ENCODE measurements at regions of chr7 and their contacts with region 1.

Region 1: DNA sequence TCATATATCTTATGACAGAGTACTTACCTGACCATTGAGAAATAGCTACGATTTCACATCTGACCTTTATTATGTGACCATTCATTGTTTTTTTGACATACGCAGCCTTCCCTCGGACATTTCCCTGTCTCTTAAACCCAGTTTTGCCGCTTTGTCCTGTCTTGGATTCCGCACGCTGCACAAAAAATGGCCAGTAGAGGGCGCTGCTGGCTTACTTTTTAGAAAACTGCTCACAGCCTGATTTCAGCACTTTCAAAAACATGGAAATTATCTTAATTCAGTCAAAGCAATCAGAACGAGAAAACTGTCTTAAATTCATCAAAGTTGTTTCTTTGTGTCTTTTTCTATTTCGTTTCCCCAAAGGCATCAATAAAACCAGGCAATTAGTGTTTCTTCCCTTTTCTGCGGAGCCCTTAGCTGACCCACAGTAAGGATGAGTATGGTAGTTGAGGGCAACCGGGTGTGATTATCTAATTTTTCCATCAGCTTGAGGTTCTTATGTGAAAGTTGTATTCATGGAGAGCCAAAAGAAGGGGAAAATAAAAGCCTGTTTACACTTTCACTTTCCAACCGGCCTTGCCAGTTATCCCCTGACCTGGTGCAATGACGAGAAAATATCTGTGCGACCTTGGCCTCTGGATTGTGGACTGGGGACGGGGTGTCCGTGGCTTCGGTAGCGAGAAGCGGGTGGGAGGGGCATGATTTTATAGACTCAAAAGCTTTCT is 144.4 kb downstream of the DYNC1I1 start:
- DNase-seq: peak; percentile 83
- ATAC-seq: peak; percentile 75
- H3K4me3 ChIP-seq: peak overlapping the region; percentile 44; the same call in 1 of the 2 replicates
- H3K27ac ChIP-seq: no peak overlapping the region
- H3K4me1 ChIP-seq: peaks cover 19% of the 10 kb centered on the region
- H3K27me3 ChIP-seq: no peaks in the 10 kb centered on the region
- CTCF ChIP-seq: peak; percentile 95

Region 2: GRCh38 chr7:95886501-95887090 is 30.1 kb before region 1 on chr7:
- CTCF ChIA-PET with region 1: no interaction called
- POLR2A ChIA-PET with region 1: no interaction called
- intact Hi-C with region 1: no loop called
- DNase-seq: peak; percentile 35
- ATAC-seq: peak; percentile 89
- H3K4me3 ChIP-seq: no peak overlapping the region
- H3K27ac ChIP-seq: no peak overlapping the region
- H3K4me1 ChIP-seq: peaks cover 3% of the 10 kb centered on the region; the same call in 1 of the 2 replicates
- H3K27me3 ChIP-seq: no peaks in the 10 kb centered on the region
- CTCF ChIP-seq: no peak

Region 3: DNA sequence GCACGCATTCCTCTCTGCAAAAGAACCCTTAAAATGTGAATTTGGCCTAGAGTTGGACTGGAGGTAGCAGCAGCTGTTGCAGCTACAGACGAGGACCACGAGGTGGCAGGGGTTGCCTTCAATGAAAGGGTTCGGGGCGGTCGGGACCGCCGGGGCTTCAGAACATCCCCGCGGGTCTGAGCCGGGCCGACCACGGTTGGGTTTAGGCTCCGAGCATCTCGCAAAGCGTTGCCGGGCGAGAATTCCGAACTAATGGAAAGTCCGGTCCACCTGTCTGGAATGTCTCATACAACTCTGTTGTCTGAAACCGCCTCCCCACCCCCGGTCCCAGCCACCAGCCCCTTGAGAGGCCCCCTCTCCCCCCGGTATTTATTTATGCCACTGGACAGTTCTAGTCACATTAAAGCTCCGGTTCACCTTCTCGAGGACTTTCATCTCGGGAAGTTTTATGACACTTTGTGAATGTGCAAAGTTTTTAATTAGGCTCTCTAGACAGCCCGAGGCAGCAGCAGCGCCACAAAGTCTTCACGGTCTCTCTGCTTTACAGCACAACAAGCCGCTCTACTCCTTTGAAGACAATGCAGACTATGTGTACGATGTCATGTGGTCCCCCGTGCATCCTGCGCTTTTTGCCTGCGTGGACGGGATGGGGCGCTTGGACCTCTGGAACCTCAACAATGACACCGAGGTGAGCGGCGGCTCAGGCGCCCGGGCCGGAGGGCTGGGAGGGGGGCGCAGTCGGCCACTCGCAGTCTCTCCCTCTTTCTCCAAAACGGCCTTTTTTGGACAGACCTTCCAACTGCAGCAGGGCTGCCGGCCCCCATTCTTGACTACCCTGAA is 159.0 kb after region 1 on chr7:
- CTCF ChIA-PET with region 1: no interaction called
- POLR2A ChIA-PET with region 1: no interaction called
- intact Hi-C with region 1: loop called (anchors 2 kb)
- DNase-seq: peak; percentile 71
- ATAC-seq: peak; percentile 85
- H3K4me3 ChIP-seq: peak overlapping the region; percentile 73
- H3K27ac ChIP-seq: no peak overlapping the region
- H3K4me1 ChIP-seq: peaks cover 17% of the 10 kb centered on the region
- H3K27me3 ChIP-seq: no peaks in the 10 kb centered on the region
- CTCF ChIP-seq: peak; percentile 90

Region 4: DNA sequence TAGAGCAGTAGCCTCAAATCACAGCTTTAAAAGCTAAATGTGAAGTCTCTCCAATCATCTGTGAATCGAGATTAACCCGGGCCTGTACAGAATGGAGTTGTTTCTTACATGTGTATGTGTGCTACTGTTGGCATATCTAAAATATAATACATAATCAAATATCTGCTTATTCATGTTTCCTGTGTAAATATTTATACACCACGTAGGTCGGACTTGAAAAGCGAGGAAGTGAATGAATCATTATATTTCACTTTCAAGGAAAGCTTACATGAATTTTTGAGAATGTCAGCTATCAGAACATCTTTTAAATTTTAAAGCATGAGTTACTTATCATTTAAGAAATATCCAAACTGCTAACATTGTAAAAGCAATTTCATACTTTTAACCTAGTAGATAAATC is 171.8 kb after region 1 on chr7:
- CTCF ChIA-PET with region 1: no interaction called
- POLR2A ChIA-PET with region 1: no interaction called
- intact Hi-C with region 1: no loop called
- DNase-seq: peak; percentile 83
- ATAC-seq: peak; percentile 78
- H3K4me3 ChIP-seq: peak overlapping the region; percentile 40
- H3K27ac ChIP-seq: peak overlapping the region; percentile 78
- H3K4me1 ChIP-seq: peaks cover 50% of the 10 kb centered on the region
- H3K27me3 ChIP-seq: no peaks in the 10 kb centered on the region
- CTCF ChIP-seq: no peak

Region 5: DNA sequence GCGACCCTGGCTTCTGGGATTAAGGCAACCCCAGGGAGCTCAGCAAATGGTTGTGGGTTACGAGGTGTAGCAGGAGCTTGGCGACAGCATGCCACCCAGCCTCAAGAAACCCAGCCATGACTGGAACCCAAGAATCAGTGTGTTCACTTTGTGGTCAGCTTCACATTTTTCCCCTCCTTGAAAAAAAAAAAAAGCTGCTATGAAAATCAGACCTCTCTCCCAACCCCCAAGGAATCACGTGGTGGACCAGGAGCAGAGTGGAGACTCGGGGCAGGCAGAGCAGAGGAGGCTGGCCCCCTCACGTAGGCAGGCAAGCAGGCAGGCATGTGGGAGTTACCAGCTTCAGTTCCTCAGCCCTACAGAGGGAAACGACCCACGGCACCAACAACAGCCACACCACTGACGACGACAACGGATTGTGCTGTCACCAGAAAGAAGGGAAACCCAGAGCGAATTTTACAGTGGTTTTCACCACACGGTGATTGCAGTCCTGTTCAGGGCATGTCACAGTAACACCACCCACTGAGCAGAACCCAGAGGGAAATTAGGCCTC is 201.8 kb after region 1 on chr7:
- CTCF ChIA-PET with region 1: no interaction called
- POLR2A ChIA-PET with region 1: no interaction called
- intact Hi-C with region 1: no loop called
- DNase-seq: no peak
- ATAC-seq: no peak
- H3K4me3 ChIP-seq: no peak overlapping the region
- H3K27ac ChIP-seq: no peak overlapping the region
- H3K4me1 ChIP-seq: no peaks in the 10 kb centered on the region
- H3K27me3 ChIP-seq: no peaks in the 10 kb centered on the region
- CTCF ChIP-seq: no peak

Region 6: GRCh38 chr7:96414931-96415292 is 498.2 kb after region 1 on chr7:
- CTCF ChIA-PET with region 1: no interaction called
- POLR2A ChIA-PET with region 1: no interaction called
- intact Hi-C with region 1: loop called (anchors 1 kb)
- DNase-seq: peak; percentile 72
- ATAC-seq: peak; percentile 95
- H3K4me3 ChIP-seq: no peak overlapping the region
- H3K27ac ChIP-seq: no peak overlapping the region
- H3K4me1 ChIP-seq: peaks cover 7% of the 10 kb centered on the region; the same call in 1 of the 2 replicates
- H3K27me3 ChIP-seq: no peaks in the 10 kb centered on the region
- CTCF ChIP-seq: peak; percentile 90

Region 7: DNA sequence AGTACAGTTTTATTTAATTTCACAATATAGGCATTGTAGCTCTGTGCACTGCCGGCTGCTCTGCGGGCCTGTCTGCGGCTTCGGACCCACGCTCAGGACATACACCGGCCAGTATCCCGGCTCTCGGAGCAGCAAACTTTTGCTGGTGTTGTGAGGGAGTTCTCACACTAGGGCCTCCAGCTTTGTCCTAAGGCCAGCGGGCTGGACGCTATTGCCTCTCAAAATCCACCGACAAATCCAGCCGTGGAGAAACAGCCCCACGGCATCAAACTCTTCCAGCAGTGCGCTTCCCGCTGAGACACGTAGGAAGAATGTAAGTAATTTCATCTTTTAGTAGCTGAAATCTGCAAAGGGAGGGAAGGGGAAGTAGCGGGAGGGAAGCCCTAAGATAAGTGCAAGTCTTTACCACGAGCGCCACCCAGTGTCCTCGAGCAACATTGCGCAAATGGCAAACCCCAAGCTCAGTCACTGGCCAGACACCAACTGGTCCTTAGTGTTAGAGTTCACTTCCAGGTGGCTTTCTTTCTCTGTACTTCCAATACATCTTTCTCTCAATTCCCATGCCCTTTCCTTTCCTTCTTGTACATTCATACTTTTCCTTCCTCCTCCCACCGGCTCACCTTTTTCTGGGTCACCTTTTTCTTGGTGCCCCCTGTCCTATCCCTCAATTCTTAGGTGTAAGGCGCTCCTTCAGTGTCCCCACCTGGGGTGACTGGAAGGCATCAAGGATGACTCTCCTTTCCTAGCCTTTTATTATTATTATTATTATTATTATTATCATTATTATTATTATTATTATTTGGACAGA is 1110.9 kb after region 1 on chr7:
- CTCF ChIA-PET with region 1: interaction called, 7 read pairs
- POLR2A ChIA-PET with region 1: no interaction called
- intact Hi-C with region 1: loop called (anchors 1 kb)
- DNase-seq: peak; percentile 83
- ATAC-seq: peak; percentile 72
- H3K4me3 ChIP-seq: peak overlapping the region; percentile 66
- H3K27ac ChIP-seq: no peak overlapping the region
- H3K4me1 ChIP-seq: peaks cover 4% of the 10 kb centered on the region
- H3K27me3 ChIP-seq: no peaks in the 10 kb centered on the region
- CTCF ChIP-seq: peak; percentile 87

Region 8: DNA sequence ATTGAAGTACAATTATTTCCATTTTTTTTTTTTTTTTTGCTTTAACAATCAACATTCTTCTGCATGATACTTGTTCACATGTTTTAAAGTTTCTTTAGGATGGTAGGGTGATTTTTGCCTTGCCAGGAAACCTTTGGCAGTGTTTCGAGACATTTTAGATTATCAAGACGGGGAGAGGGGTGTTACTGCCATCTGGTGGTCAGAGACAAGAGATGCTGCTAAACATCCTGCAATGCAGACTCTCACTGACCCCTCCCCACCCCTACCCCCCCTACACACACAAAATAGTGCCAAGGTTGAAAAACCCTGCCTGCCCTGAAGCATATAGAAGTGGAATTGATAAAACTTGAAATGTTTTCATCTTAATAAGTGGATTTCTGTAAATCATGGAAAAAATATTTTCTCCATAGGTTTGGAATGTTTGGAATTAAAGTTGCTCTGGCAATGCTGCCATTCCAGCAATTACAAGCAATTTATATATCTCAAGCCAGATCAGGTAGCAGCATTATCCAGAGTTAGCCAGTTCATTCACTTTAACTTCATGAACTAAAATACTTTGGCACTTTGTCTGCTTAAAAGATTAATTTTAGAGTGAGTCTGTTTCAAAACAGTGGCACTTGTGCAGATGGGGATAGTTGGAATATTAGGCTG is 1262.8 kb after region 1 on chr7:
- CTCF ChIA-PET with region 1: no interaction called
- POLR2A ChIA-PET with region 1: no interaction called
- intact Hi-C with region 1: loop called (anchors 5 kb)
- DNase-seq: peak; percentile 60
- ATAC-seq: peak; percentile 71
- H3K4me3 ChIP-seq: no peak overlapping the region
- H3K27ac ChIP-seq: no peak overlapping the region
- H3K4me1 ChIP-seq: no peaks in the 10 kb centered on the region
- H3K27me3 ChIP-seq: no peaks in the 10 kb centered on the region
- CTCF ChIP-seq: peak; percentile 65; the same call in 1 of the 2 replicates